ENCODE measurements at regions of chr2 and their contacts with region 1.

Region 1: GRCh38 chr2:172397148-172397834 is 30.1 kb upstream of the ITGA6 start:
- DNase-seq: no peak
- H3K4me3 ChIP-seq: no peak overlapping the region
- H3K27ac ChIP-seq: no peak overlapping the region
- H3K4me1 ChIP-seq: no peaks in the 10 kb centered on the region
- H3K27me3 ChIP-seq: no peaks in the 10 kb centered on the region
- CTCF ChIP-seq: no peak

Region 2: GRCh38 chr2:172358691-172359556 is 38.4 kb before region 1 on chr2:
- CTCF ChIA-PET with region 1: no interaction called
- dilution Hi-C with region 1: loop called (anchors 5 kb)
- in situ Hi-C with region 1: no loop called
- intact Hi-C with region 1: no loop called
- DNase-seq: no peak
- H3K4me3 ChIP-seq: no peak overlapping the region
- H3K27ac ChIP-seq: no peak overlapping the region
- H3K4me1 ChIP-seq: peaks cover 2% of the 10 kb centered on the region
- H3K27me3 ChIP-seq: no peaks in the 10 kb centered on the region
- CTCF ChIP-seq: no peak

Measured in mammary epithelial cell (primary cell).